Heart left ventricle (tissue), 16 donors: ENCODE measurements at regions of chr18 and their contacts with region 1.

Region 1: GRCh38 chr18:62957885-62958472 is 242.6 kb downstream of the PHLPP1 start:
- DNase-seq: peak in 3 of 5 donors; percentile 28 to 40 (median 34)
- ATAC-seq: peak in 3 of 4 donors; percentile 45 to 65 (median 58)
- H3K4me3 ChIP-seq: no peak overlapping the region
- H3K27ac ChIP-seq: no peak overlapping the region
- H3K4me1 ChIP-seq: peaks cover 0 to 15% (median 6%) of the 10 kb centered on the region in 12 donors
- H3K27me3 ChIP-seq: no peaks in the 10 kb centered on the region
- CTCF ChIP-seq: peak; percentile 24 to 62 (median 49)
- POLR2A ChIP-seq: no peak

Region 2: DNA sequence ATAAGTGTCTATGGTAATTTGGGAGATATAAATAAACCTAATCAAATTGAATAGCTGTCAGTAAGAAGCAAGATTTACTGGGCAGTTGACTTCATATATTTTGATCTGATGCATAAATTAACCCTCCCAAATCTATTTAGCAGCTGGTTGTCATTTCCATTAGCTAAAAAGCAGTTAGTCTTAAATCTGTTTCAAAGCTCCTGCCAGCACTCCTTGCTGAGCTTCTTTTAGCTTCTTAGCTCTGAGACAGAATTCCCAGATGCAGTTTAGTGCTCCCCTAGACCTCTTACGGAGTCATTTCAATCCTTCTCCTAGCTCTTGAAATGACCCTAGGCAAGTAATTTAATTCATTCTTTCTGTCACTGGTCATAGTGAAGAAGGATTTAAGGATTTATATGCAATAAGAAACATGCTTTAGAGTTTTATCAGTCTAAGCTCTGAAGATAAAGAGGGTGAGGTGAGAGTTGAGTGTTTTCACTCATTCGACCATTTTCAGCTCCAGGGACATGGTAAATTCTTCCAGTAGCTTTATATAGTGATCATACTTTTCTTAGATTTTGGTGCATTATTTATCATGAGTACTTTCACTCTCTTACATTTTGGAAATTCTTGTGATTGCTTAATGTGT is 143.7 kb before region 1 on chr18:
- intact Hi-C with region 1: loop called in 1 of 10 experiments (anchors 10 kb)
- DNase-seq: no peak
- ATAC-seq: no peak
- H3K4me3 ChIP-seq: no peak overlapping the region
- H3K27ac ChIP-seq: no peak overlapping the region
- H3K4me1 ChIP-seq: peaks cover 0 to 19% (median 10%) of the 10 kb centered on the region in 12 donors
- H3K27me3 ChIP-seq: no peaks in the 10 kb centered on the region
- CTCF ChIP-seq: no peak
- POLR2A ChIP-seq: no peak